OCI-LY7 (cell line): ENCODE measurements at regions of chr20 and their contacts with region 1.

Region 1: GRCh38 chr20:54630582-54630981 is 155.2 kb downstream of the DOK5 start:
- DNase-seq: no peak
- H3K4me3 ChIP-seq: no peak overlapping the region
- H3K27ac ChIP-seq: no peak overlapping the region
- H3K4me1 ChIP-seq: no peaks in the 10 kb centered on the region
- CTCF ChIP-seq: no peak

Region 2: GRCh38 chr20:54514012-54514607 is 116.5 kb before region 1 on chr20:
- CTCF ChIA-PET with region 1: no interaction called
- POLR2A ChIA-PET with region 1: interaction called, 10 read pairs
- intact Hi-C with region 1: no loop called
- DNase-seq: no peak
- H3K4me3 ChIP-seq: no peak overlapping the region
- H3K27ac ChIP-seq: no peak overlapping the region
- H3K4me1 ChIP-seq: no peaks in the 10 kb centered on the region
- CTCF ChIP-seq: no peak